ENCODE measurements at regions of chr6 and their contacts with region 1.

Region 1: DNA sequence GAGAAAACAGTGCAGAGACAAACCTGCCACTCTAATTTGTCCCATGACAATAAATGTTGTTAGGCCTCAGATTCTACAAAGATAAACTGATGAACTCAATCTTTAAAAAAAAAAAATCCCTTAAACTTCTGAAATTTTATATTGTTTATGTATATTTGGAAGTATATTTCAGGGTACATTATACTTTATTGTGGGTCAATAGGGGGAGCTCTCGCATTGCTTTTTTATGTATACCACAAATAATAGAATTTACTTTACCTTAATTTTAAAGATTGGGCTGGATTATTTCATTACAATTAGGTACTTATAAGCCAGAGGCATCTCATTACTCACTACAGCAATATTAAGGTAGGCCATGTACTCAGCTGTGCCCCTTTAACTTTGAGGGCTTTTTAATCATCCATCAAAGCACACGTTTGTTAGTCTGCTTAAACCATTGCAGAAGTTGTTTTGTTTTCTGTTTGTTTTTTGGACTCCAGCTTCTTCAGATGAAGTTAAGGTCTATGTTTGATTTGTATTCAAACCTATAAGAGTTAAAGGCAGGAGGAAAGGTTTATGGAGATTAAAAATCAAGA is 56.3 kb upstream of the EYA4 start:
- ATAC-seq: peak in 2 of 8 experiments; percentile 28 to 34
- H3K4me3 ChIP-seq: no peak overlapping the region
- H3K27ac ChIP-seq: no peak overlapping the region
- H3K4me1 ChIP-seq: no peaks in the 10 kb centered on the region

Region 2: GRCh38 chr6:133062077-133062476 is 122.8 kb before region 1 on chr6:
- in situ Hi-C with region 1: no loop called
- ATAC-seq: peak in 2 of 8 experiments; percentile 96 to 99
- H3K4me3 ChIP-seq: no peak overlapping the region
- H3K27ac ChIP-seq: no peak overlapping the region
- H3K4me1 ChIP-seq: no peaks in the 10 kb centered on the region

Region 3: GRCh38 chr6:133487174-133487573 is 302.3 kb after region 1 on chr6:
- in situ Hi-C with region 1: loop called in 1 of 9 experiments (anchors 25 kb)
- ATAC-seq: peak in 1 of 8 experiments; percentile 45
- H3K4me3 ChIP-seq: no peak overlapping the region
- H3K27ac ChIP-seq: no peak overlapping the region
- H3K4me1 ChIP-seq: no peaks in the 10 kb centered on the region

Region 4: DNA sequence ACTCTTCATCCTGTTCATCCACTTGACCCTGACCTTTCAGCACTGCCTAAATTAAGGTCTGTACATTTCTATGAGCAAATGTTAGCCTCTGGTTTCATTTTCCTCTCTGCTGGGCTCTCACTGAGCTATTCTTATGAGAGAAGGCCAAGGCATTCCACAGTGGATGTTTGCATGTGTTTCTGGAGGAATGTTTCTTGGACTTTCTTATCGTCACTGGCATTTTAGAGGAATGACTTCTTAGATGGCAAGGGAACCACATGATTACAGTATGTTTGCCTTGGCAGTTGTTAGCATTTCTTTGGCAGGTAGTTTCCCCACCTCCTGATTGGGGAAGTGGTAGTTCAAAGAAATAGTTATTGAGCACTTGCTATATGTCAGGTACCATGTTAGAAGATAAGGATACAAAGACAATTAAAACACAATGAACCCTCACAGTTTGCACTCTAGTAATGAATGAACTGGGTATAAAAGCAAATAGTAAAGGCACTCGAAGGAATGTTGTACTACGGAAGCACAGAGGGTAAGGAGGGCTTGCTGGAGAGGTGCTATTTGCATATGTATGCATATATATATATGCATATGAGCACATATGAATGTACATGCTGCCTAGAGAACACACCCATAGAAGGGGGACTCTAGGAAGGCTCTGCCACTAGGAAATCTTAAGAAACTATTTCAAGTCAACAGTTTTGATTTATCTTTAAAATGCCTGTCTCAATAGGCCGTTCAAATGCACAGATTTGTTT is 363.7 kb after region 1 on chr6:
- in situ Hi-C with region 1: loop called in 2 of 9 experiments (anchors 10 to 25 kb)
- ATAC-seq: peak in 7 of 8 experiments; percentile 40 to 98 (median 67)
- H3K4me3 ChIP-seq: no peak overlapping the region
- H3K27ac ChIP-seq: no peak overlapping the region
- H3K4me1 ChIP-seq: peaks cover 12 to 15% of the 10 kb centered on the region in 2 donors

Region 5: DNA sequence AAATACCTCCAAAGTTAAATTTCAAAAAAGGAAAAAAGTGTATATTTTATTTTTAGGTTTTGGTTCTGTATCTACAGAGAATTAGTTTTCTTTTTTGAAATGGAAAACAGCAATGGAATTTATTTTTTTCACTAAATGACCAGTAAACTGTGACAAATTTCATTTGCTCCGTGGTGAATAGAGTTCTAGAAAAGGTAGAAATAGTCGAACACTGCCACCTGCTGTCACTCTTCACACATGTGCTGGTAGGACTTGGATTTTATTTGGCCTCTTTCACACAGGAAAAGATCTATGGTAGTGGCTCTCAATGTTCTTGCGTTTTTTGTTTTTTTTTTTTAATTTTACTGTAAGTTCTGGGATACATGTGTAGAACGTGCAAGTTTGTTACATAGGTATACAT is 368.8 kb after region 1 on chr6:
- in situ Hi-C with region 1: loop called in 2 of 9 experiments (anchors 10 to 25 kb)
- ATAC-seq: peak in 7 of 8 experiments; percentile 29 to 64 (median 48)
- H3K4me3 ChIP-seq: no peak overlapping the region
- H3K27ac ChIP-seq: no peak overlapping the region
- H3K4me1 ChIP-seq: peaks cover 12 to 13% of the 10 kb centered on the region in 2 donors